Mammary epithelial cell (primary cell): ENCODE measurements at regions of chr12 and their contacts with region 1.

Region 1: DNA sequence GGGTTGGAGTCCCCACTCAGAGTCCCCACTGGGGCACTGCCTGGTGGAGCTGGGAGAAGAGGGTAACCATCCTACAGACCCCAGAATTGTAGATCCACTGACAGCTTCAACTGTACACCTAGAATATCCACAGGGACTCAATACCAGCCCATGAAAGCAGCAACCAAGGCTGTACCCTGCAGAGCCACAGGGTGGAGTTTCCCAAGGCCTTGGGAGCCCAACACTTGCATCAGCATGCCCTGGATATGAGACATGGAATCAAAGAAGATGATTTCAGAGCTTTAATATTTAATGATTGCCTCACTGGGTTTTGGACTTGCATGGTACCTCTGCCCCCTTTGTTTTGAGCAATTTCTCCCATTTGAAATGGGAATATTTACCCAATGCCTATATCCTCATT is 80.4 kb downstream of the RASSF9 start:
- DNase-seq: peak; percentile 74
- H3K4me3 ChIP-seq: no peak overlapping the region
- H3K27ac ChIP-seq: peak overlapping the region; percentile 48
- H3K4me1 ChIP-seq: peaks cover 11% of the 10 kb centered on the region
- H3K27me3 ChIP-seq: no peaks in the 10 kb centered on the region
- CTCF ChIP-seq: peak; percentile 40 to 72

Region 2: GRCh38 chr12:85468356-85469157 is 287.2 kb before region 1 on chr12:
- CTCF ChIA-PET with region 1: no interaction called
- dilution Hi-C with region 1: no loop called
- in situ Hi-C with region 1: no loop called
- intact Hi-C with region 1: loop called (anchors 5 kb)
- DNase-seq: peak; percentile 70
- H3K4me3 ChIP-seq: peak overlapping the region in 2 of 3 experiments; percentile 15 to 16
- H3K27ac ChIP-seq: peak overlapping the region; percentile 31
- H3K4me1 ChIP-seq: peaks cover 43% of the 10 kb centered on the region
- H3K27me3 ChIP-seq: no peaks in the 10 kb centered on the region
- CTCF ChIP-seq: peak; percentile 81 to 84

Region 3: DNA sequence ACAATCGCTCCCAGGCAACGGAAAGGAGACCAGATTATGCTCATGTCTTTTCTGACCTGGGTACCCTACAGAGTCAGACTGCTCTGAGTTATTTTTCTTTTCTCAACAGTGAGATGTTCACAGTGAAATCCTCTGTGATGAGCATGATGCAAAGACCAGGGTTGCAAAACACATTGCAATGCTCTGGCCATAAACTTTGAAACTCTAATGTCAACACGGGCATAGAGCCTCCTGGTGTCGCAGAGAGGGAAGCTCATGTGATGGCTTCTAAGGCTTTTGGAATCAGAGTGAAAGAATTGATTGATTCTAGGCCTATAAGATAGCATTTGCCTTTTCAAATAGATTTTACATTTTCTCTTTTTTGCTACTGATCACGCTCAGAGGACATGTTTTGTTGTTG is 113.0 kb before region 1 on chr12:
- CTCF ChIA-PET with region 1: no interaction called
- dilution Hi-C with region 1: no loop called
- in situ Hi-C with region 1: no loop called
- intact Hi-C with region 1: no loop called
- DNase-seq: no peak
- H3K4me3 ChIP-seq: no peak overlapping the region
- H3K27ac ChIP-seq: no peak overlapping the region
- H3K4me1 ChIP-seq: no peaks in the 10 kb centered on the region
- H3K27me3 ChIP-seq: no peaks in the 10 kb centered on the region
- CTCF ChIP-seq: peak in 1 of 2 donors; percentile 32

Region 4: GRCh38 chr12:85676816-85677749 is 78.7 kb before region 1 on chr12:
- CTCF ChIA-PET with region 1: no interaction called
- dilution Hi-C with region 1: no loop called
- in situ Hi-C with region 1: no loop called
- intact Hi-C with region 1: no loop called
- DNase-seq: no peak
- H3K4me3 ChIP-seq: no peak overlapping the region
- H3K27ac ChIP-seq: no peak overlapping the region
- H3K4me1 ChIP-seq: peaks cover 5% of the 10 kb centered on the region
- H3K27me3 ChIP-seq: no peaks in the 10 kb centered on the region
- CTCF ChIP-seq: no peak

Region 5: DNA sequence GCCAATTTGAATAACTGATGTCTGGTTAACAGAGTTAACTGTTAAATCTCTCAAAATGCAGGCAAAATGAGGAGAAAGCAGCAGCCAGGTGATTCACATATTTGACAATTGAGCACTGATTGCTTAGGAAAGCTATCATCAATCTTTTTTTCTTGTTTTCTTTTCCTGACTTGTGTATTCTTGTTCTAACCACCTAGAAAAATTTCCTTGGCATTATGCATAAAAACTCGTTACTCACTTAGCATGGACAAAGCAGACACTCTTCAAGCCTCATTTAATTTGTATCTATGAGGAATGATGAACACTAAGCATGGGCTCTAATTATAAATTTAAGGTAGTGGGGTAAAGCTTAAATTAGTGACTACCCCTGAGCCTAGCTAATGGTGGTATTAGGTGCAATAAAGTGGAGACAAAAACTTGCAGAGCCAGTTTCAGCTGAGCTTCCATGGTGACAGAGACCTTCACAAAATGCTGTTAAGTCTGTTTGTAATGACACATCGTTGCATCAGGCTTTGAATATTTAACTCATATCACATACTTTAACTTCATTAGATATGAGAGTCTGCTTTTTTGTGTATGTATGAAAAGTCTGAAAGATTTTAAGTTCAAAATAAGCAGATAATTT is 28.4 kb after region 1 on chr12:
- CTCF ChIA-PET with region 1: no interaction called
- dilution Hi-C with region 1: no loop called
- in situ Hi-C with region 1: no loop called
- intact Hi-C with region 1: loop called (anchors 1 kb)
- DNase-seq: peak; percentile 68
- H3K4me3 ChIP-seq: no peak overlapping the region
- H3K27ac ChIP-seq: peak overlapping the region; percentile 25
- H3K4me1 ChIP-seq: no peaks in the 10 kb centered on the region
- H3K27me3 ChIP-seq: no peaks in the 10 kb centered on the region
- CTCF ChIP-seq: no peak

Region 6: GRCh38 chr12:85836197-85837090 is 80.7 kb after region 1 on chr12 and contains the start of gene RASSF9:
- CTCF ChIA-PET with region 1: interaction called, 5 read pairs
- dilution Hi-C with region 1: no loop called
- in situ Hi-C with region 1: no loop called
- intact Hi-C with region 1: loop called (anchors 2 kb)
- DNase-seq: peak; percentile 86
- H3K4me3 ChIP-seq: peak within 1 kb of the TSS; percentile 49 to 83 (median 69)
- H3K27ac ChIP-seq: peak within 1 kb of the TSS; percentile 93
- H3K4me1 ChIP-seq: peaks cover 17% of the 10 kb centered on the region
- H3K27me3 ChIP-seq: no peaks in the 10 kb centered on the region
- CTCF ChIP-seq: no peak
- total RNA-seq, gene RASSF9: 7.1 to 13.5 TPM

Region 7: GRCh38 chr12:85996280-85996679 is 240.5 kb after region 1 on chr12:
- CTCF ChIA-PET with region 1: no interaction called
- dilution Hi-C with region 1: no loop called
- in situ Hi-C with region 1: no loop called
- intact Hi-C with region 1: no loop called
- DNase-seq: no peak
- H3K4me3 ChIP-seq: no peak overlapping the region
- H3K27ac ChIP-seq: no peak overlapping the region
- H3K4me1 ChIP-seq: no peaks in the 10 kb centered on the region
- H3K27me3 ChIP-seq: no peaks in the 10 kb centered on the region
- CTCF ChIP-seq: no peak

Region 8: DNA sequence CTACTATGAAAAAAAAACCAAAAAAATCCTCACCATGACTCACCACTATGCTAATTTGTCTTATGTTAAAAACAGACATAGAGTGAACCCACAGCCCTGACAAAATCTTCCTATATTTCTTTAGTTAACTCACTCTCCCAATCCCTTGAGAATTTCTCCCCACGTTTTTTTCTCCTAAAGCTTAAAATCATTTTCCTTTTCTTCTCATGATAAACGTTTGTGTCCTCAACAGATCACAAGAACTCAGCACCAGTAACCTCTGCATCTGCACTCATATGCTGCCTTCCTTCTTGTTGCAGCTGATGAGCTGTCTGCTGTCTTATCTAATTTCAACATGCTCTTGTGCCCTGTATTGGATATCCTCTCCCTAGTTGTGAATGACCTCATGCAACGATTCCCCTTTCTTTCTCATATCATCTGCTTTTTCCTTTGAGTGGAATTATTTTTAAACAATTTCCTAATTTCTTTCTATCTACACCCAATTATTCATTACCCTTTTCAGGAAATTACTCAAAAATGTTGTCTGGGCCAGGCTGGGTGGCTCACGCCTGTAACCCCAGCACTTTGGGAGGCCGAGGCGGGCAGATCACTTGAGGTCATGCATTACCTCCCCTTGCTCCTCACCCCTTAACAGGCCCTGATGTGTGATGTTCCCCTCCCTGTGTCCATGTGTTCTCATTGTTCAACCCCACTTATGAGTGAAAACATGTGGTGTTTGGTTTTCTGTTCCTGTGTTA is 928.0 kb after region 1 on chr12:
- CTCF ChIA-PET with region 1: no interaction called
- dilution Hi-C with region 1: no loop called
- in situ Hi-C with region 1: no loop called
- intact Hi-C with region 1: no loop called
- DNase-seq: no peak
- H3K4me3 ChIP-seq: no peak overlapping the region
- H3K27ac ChIP-seq: no peak overlapping the region
- H3K4me1 ChIP-seq: no peaks in the 10 kb centered on the region
- H3K27me3 ChIP-seq: no peaks in the 10 kb centered on the region
- CTCF ChIP-seq: no peak